Cardiac septum (tissue), 1 donor: ENCODE measurements at regions of chr18 and their contacts with region 1.

Region 1: DNA sequence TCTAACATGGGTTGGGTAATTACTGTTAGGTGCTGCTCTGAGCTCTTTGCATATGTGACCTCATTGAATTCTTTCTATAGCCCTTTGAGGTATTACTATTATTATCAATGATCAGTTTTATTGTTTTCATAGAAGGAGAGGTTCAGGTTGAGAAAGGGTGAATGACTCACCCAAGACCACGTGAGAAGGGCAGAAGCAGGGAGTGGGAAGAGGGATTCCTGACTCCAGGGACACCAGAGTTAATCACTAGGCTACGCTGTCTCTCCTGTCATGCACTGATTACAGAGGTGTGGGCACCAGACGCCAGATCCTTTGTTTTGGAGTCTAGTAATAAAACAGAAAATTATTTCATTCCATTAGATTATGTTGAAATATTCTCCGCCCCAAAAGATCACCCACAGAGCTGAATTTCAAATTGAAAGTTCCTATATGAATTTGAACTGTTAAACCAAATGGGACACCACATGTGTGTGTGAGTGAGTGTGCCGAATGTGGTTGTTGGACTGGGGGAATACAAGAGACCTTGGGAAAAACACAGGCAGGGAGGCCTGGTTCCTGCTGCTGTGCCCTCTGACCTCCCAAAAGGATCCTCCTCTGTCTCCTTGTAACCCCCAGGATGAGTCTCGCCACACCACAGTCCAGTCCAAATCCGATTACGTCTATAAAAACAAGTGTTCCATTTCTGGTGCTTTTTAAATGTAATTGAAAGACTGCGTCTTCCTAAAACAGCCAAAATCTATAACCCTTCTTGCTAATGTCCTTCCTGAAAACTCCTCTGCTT is 215.4 kb downstream of the ZNF521 start:
- DNase-seq: no peak

Region 2: GRCh38 chr18:24987303-24988252 is 149.0 kb before region 1 on chr18:
- intact Hi-C with region 1: loop called (anchors 10 kb)
- DNase-seq: no peak